Calu3 (cell line): ENCODE measurements at regions of chr9 and their contacts with region 1.

Region 1: DNA sequence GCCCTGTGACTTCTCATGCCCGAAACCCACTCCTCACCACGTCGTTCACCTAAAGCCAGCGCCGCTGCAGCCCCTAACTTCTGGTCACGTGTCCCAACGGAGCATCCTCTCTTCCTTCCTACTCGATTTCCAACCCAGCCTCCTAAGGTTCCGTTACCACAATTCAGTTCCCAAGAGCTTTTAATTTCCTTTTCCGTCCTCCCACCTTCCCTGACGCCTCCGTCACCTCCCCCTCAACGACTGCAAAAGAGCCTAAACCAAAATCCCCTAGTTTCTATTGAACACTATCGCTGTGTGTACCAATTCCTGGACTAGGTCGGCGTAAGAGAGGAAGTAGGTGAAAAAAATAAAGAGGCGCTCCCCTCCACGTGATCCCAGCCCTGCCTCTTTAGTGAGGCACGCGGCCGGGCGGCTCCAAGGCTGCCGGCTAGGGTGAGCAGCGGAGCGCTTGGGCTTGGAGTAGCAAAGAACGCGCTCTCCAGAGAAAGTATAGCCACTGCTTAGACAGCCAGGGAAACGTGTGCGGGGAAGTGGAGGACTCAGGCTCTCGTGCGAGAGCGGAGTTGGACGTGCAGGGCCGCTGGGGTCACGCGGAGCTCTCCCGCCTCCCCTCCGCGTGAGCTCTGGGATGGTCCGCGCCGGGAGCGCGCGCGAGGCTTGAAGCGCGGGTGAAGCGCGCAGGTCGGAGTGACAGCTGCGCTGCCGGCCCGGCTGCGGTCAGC is at the starts of genes CENPP and NOL8:
- DNase-seq: peak; percentile 73
- H3K4me3 Mint-ChIP-seq: peak within 1 kb of the TSS; percentile 93
- H3K27ac Mint-ChIP-seq: peak within 1 kb of the TSS; percentile 96
- H3K4me1 Mint-ChIP-seq: peaks cover 28% of the 10 kb centered on the region
- H3K27me3 Mint-ChIP-seq: no peaks in the 10 kb centered on the region
- CTCF ChIP-seq: no peak
- total RNA-seq, gene CENPP: 5.3 and 7.2 TPM in 2 replicates
- total RNA-seq, gene NOL8: 37.1 and 42.9 TPM in 2 replicates

Region 2: DNA sequence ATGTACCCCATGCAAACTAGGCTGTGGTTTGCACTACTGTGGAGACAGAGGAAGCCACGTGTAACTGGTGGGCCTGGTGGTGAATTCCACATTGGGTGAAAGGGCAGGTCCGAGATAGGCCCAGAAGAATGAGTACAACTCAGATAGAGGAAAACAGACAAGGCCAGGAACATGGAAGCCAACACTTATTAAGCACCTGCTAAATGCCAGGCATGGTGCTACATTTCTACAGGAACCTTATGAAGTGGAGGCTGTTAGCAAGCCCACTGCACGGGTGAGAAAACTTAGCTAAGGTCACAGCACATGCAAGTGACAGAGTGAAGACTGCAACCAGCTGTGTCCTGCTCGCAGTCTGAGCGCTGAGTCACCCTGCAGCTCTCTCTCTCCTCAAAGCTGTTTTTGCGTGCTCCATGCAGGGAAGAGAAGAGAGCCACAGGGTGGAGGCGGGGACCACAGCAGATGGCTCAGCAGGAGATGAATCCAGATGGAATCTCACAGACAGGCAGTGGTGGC is 144.7 kb before region 1 on chr9:
- CTCF ChIA-PET with region 1: no interaction called
- intact Hi-C with region 1: no loop called
- DNase-seq: no peak
- H3K4me3 Mint-ChIP-seq: no peak overlapping the region
- H3K27ac Mint-ChIP-seq: no peak overlapping the region
- H3K4me1 Mint-ChIP-seq: no peaks in the 10 kb centered on the region
- H3K27me3 Mint-ChIP-seq: peaks cover 89% of the 10 kb centered on the region
- CTCF ChIP-seq: no peak

Region 3: GRCh38 chr9:92393686-92394085 is 68.3 kb after region 1 on chr9:
- CTCF ChIA-PET with region 1: no interaction called
- intact Hi-C with region 1: no loop called
- DNase-seq: no peak
- H3K4me3 Mint-ChIP-seq: no peak overlapping the region
- H3K27ac Mint-ChIP-seq: no peak overlapping the region
- H3K4me1 Mint-ChIP-seq: no peaks in the 10 kb centered on the region
- H3K27me3 Mint-ChIP-seq: no peaks in the 10 kb centered on the region
- CTCF ChIP-seq: no peak

Region 4: GRCh38 chr9:92438900-92439526 is 113.6 kb after region 1 on chr9:
- CTCF ChIA-PET with region 1: interaction called, 8 read pairs
- intact Hi-C with region 1: loop called (anchors 10 kb)
- DNase-seq: no peak
- H3K4me3 Mint-ChIP-seq: no peak overlapping the region
- H3K27ac Mint-ChIP-seq: no peak overlapping the region
- H3K4me1 Mint-ChIP-seq: no peaks in the 10 kb centered on the region
- H3K27me3 Mint-ChIP-seq: no peaks in the 10 kb centered on the region
- CTCF ChIP-seq: no peak

Region 5: GRCh38 chr9:92634712-92635605 is 309.5 kb after region 1 on chr9:
- CTCF ChIA-PET with region 1: interaction called, 3 read pairs
- intact Hi-C with region 1: loop called (anchors 10 kb)
- DNase-seq: peak; percentile 68
- H3K4me3 Mint-ChIP-seq: no peak overlapping the region
- H3K27ac Mint-ChIP-seq: no peak overlapping the region
- H3K4me1 Mint-ChIP-seq: no peaks in the 10 kb centered on the region
- H3K27me3 Mint-ChIP-seq: no peaks in the 10 kb centered on the region
- CTCF ChIP-seq: peak; percentile 79

Region 6: DNA sequence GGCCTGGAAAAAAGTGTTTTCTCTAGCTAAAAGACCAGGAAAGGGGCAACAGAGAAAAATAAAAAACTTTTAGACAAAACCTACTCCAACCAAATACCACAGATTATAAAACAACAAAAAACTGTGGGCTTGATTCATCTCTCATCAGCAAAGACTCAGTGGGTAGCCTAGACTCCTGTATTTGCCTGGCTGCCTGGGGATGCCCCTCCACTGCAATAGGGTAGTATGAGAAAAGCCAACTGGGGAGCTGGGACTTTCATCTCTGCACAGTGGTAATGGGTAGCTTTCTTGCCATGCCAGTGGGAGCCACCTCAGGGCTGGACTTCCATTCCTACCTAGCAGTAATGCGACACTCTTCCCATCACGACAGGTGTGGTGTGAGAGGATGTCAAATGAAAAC is 544.9 kb after region 1 on chr9:
- CTCF ChIA-PET with region 1: no interaction called
- intact Hi-C with region 1: no loop called
- DNase-seq: no peak
- H3K4me3 Mint-ChIP-seq: no peak overlapping the region
- H3K27ac Mint-ChIP-seq: no peak overlapping the region
- H3K4me1 Mint-ChIP-seq: no peaks in the 10 kb centered on the region
- H3K27me3 Mint-ChIP-seq: no peaks in the 10 kb centered on the region
- CTCF ChIP-seq: no peak